ENCODE measurements at regions of chr1 and their contacts with region 1.

Region 1: GRCh38 chr1:181479137-181479745 is 4.1 kb upstream of the CACNA1E start:
- DNase-seq: peak; percentile 21 to 53 (median 51)
- H3K4me3 ChIP-seq: no peak overlapping the region
- H3K4me3 Mint-ChIP-seq: no peak overlapping the region
- H3K27ac ChIP-seq: no peak overlapping the region
- H3K27ac Mint-ChIP-seq: no peak overlapping the region
- H3K4me1 ChIP-seq: peaks cover 8 to 14% of the 10 kb centered on the region in 2 donors
- H3K4me1 Mint-ChIP-seq: peaks cover 12% of the 10 kb centered on the region
- H3K27me3 ChIP-seq: peaks cover 41 to 46% of the 10 kb centered on the region in 2 donors
- H3K27me3 Mint-ChIP-seq: peaks cover 43 to 58% (median 45%) of the 10 kb centered on the region in 3 donors
- CTCF ChIP-seq: peak; percentile 75

Region 2: DNA sequence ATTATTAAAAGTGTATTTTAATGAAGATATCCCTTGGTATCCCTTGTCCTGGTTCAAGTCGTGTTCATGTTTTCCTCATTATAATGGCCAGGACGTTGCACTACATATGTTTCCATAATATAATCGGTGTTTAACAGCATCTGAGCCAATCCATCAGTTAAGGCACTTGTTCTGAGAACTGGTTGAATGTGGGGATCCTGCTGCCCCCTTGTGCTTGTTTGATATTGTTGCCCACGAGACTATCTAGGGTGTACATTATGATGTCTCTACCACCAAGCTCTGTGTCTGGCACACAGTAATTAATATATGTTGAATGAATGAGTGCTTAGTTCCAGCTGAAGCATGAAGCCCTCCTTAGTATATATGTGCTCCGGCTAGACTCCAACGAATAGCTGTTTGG is 197.0 kb after region 1 on chr1:
- intact Hi-C with region 1: loop called in 1 of 2 experiments (anchors 10 kb)
- DNase-seq: no peak
- H3K4me3 ChIP-seq: no peak overlapping the region
- H3K4me3 Mint-ChIP-seq: no peak overlapping the region
- H3K27ac ChIP-seq: no peak overlapping the region
- H3K27ac Mint-ChIP-seq: no peak overlapping the region
- H3K4me1 ChIP-seq: no peaks in the 10 kb centered on the region
- H3K4me1 Mint-ChIP-seq: no peaks in the 10 kb centered on the region
- H3K27me3 ChIP-seq: no peaks in the 10 kb centered on the region
- H3K27me3 Mint-ChIP-seq: peaks cover 6 to 8% (median 7%) of the 10 kb centered on the region in 3 donors
- CTCF ChIP-seq: peak; percentile 15

Region 3: GRCh38 chr1:182054698-182055326 is 575.6 kb after region 1 on chr1:
- intact Hi-C with region 1: loop called (anchors 2 to 5 kb)
- DNase-seq: peak; percentile 32 to 55 (median 47)
- H3K4me3 ChIP-seq: no peak overlapping the region
- H3K4me3 Mint-ChIP-seq: peak overlapping the region in 1 of 2 donors; percentile 1
- H3K27ac ChIP-seq: no peak overlapping the region
- H3K27ac Mint-ChIP-seq: no peak overlapping the region
- H3K4me1 ChIP-seq: no peaks in the 10 kb centered on the region
- H3K4me1 Mint-ChIP-seq: peaks cover 9% of the 10 kb centered on the region
- H3K27me3 ChIP-seq: peaks cover 8 to 39% of the 10 kb centered on the region in 2 donors
- H3K27me3 Mint-ChIP-seq: peaks cover 37 to 45% (median 40%) of the 10 kb centered on the region in 3 donors
- CTCF ChIP-seq: peak; percentile 79

Measured in CD14-positive monocyte (primary cell).